ENCODE measurements at regions of chr1 and their contacts with region 1.

Region 1: DNA sequence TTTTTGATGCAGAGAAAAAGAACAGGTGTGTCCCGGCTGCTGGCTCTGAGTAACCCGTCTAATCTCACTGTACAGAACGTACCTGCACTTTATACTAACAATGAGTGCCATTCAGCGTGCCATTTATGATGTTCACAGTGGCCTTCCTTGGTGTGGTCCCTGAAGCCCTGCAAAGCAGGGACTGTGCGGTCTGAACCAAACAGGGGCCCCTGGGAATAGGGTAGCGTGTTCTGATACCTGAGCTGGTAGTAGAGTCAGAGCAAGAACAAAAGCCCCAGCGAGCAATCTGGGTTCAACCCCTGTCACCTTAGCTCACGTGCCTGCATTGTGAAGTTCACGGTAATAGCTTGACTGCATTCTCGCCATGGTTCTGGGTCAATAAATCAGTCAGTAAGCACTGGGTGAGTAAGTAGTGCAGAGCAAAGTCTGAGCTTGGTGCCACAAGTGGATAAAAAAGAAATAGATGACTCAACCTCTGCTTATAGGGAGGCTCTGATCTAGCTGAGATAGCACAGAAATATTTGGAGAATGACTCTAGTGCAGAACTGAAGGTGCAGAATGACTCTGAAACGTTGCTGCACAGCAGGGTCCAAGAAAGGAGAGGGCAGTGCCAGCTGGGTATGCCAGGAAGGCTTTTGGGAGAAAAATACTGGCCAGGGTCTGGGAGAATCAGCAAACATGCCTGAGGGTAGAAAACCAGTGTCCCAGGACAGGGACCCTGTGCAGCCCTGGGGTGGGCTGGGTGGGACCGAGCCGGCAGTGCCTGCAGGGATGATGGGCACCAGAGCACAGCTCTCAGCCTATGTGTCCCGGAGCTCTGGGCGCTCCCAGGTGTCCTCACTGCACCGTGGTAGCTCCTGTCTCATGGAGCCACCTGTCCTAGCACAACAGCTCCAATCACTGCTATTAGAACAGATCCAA is 125.9 kb downstream of the RHOU start:
- DNase-seq: no peak
- ATAC-seq: no peak
- H3K4me3 ChIP-seq: no peak overlapping the region
- H3K27ac ChIP-seq: no peak overlapping the region
- H3K4me1 ChIP-seq: peaks cover 0 to 24% (median 0%) of the 10 kb centered on the region in 9 donors
- H3K27me3 ChIP-seq: peaks cover 0 to 25% (median 8%) of the 10 kb centered on the region in 7 donors
- CTCF ChIP-seq: no peak

Region 2: GRCh38 chr1:228938537-228938901 is 77.3 kb after region 1 on chr1:
- intact Hi-C with region 1: loop called in 1 of 10 experiments (anchors 10 kb)
- DNase-seq: peak in 1 of 2 donors; percentile 55
- ATAC-seq: peak; percentile 82 to 93 (median 88)
- H3K4me3 ChIP-seq: peak overlapping the region in 4 of 10 donors; percentile 7 to 17 (median 12)
- H3K27ac ChIP-seq: peak overlapping the region; percentile 20 to 87 (median 66)
- H3K4me1 ChIP-seq: peaks cover 3 to 67% (median 21%) of the 10 kb centered on the region in 9 donors
- H3K27me3 ChIP-seq: peaks cover 0 to under 1% (median 0%) of the 10 kb centered on the region in 7 donors
- CTCF ChIP-seq: no peak